ENCODE measurements at regions of chr17 and their contacts with region 1.

Region 1: GRCh38 chr17:2244545-2245525 is 58.8 kb downstream of the SMG6 start:
- DNase-seq: peak; percentile 92
- ATAC-seq: peak; percentile 80
- H3K4me3 Mint-ChIP-seq: no peak overlapping the region
- H3K27ac Mint-ChIP-seq: no peak overlapping the region
- H3K4me1 Mint-ChIP-seq: peaks cover 41% of the 10 kb centered on the region
- H3K27me3 Mint-ChIP-seq: no peaks in the 10 kb centered on the region

Region 2: GRCh38 chr17:2094891-2095535 is 149.8 kb before region 1 on chr17:
- CTCF ChIA-PET with region 1: interaction called, 25 read pairs
- POLR2A ChIA-PET with region 1: no interaction called
- intact Hi-C with region 1: no loop called
- DNase-seq: no peak
- ATAC-seq: no peak
- H3K4me3 Mint-ChIP-seq: no peak overlapping the region
- H3K27ac Mint-ChIP-seq: no peak overlapping the region
- H3K4me1 Mint-ChIP-seq: peaks cover 19% of the 10 kb centered on the region
- H3K27me3 Mint-ChIP-seq: no peaks in the 10 kb centered on the region

Region 3: GRCh38 chr17:2192367-2193057 is 52.3 kb before region 1 on chr17:
- CTCF ChIA-PET with region 1: interaction called, 23 read pairs
- POLR2A ChIA-PET with region 1: interaction called, 3 read pairs
- intact Hi-C with region 1: loop called (anchors 5 to 10 kb)
- DNase-seq: peak; percentile 69
- ATAC-seq: peak; percentile 57
- H3K4me3 Mint-ChIP-seq: no peak overlapping the region
- H3K27ac Mint-ChIP-seq: peak overlapping the region; percentile 61
- H3K4me1 Mint-ChIP-seq: peaks cover 47% of the 10 kb centered on the region
- H3K27me3 Mint-ChIP-seq: no peaks in the 10 kb centered on the region

Region 4: GRCh38 chr17:2215616-2216364 is 29.0 kb before region 1 on chr17:
- CTCF ChIA-PET with region 1: interaction called, 21 read pairs
- POLR2A ChIA-PET with region 1: no interaction called
- intact Hi-C with region 1: loop called in 1 of 2 experiments (anchors 2 kb)
- DNase-seq: peak; percentile 85
- ATAC-seq: peak; percentile 97
- H3K4me3 Mint-ChIP-seq: peak overlapping the region; percentile 74
- H3K27ac Mint-ChIP-seq: peak overlapping the region; percentile 96
- H3K4me1 Mint-ChIP-seq: peaks cover 58% of the 10 kb centered on the region
- H3K27me3 Mint-ChIP-seq: no peaks in the 10 kb centered on the region

Region 5: DNA sequence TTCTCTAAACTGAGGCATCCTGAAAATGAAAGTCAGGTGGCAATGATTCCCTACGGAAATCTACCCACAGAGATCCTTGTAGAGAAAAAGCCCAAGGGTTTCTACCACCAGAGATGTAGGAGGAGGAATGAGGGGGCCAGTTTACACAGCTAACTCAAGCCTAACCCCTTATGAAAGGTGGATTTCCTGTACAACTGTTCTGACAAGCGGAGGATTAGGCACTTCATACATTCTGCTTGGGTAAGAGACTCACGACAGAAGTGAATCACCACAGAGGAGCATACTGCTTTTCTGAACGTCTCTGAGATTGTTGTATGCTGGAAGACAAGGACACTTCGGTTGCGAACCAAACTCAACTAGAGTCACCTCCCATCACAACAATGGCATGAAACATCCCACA is 14.0 kb before region 1 on chr17:
- CTCF ChIA-PET with region 1: interaction called, 18 read pairs
- POLR2A ChIA-PET with region 1: no interaction called
- intact Hi-C with region 1: no loop called
- DNase-seq: no peak
- ATAC-seq: peak; percentile 85
- H3K4me3 Mint-ChIP-seq: no peak overlapping the region
- H3K27ac Mint-ChIP-seq: peak overlapping the region; percentile 40
- H3K4me1 Mint-ChIP-seq: peaks cover 7% of the 10 kb centered on the region
- H3K27me3 Mint-ChIP-seq: no peaks in the 10 kb centered on the region

Region 6: DNA sequence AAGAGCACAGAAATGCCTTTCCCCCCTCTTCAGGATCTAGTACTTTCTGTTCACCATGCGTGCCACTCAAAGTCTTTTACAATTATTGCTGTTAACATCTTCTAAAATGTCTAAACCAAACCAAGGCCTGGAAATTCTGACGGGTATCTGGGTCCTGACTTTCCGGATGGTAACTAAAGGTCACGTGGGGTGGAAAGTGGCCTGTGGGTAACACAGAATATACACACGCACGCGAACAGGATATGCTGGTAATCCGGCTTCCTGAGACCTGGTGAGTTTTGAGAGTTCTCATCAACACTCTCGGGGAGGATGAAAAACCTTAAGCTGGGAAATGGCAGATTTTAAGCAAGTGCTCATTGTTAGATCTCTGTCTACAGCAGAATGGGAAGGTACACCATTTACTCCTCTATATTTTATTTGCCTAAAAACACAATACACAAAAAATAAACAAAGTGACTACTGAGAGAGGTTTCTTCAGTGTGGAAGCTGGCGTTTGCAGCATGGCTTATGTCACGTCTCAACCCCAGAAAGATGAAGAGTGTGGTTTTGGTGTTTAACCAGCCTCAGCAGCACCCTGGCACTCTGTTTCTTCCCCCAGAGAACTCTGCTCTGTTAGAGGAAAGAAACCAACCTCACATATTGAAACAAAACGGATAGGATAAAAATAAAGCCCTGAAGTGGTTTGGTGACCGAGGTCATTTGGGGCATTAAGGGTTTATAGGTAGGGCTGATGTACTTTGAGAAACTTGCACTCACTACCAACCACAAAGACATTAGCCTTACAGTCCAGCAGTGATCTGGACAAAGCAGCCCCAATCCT is 21.4 kb after region 1 on chr17:
- CTCF ChIA-PET with region 1: interaction called, 19 read pairs
- POLR2A ChIA-PET with region 1: no interaction called
- intact Hi-C with region 1: no loop called
- DNase-seq: peak; percentile 93
- ATAC-seq: peak; percentile 76
- H3K4me3 Mint-ChIP-seq: peak overlapping the region; percentile 72
- H3K27ac Mint-ChIP-seq: peak overlapping the region; percentile 98
- H3K4me1 Mint-ChIP-seq: peaks cover 86% of the 10 kb centered on the region
- H3K27me3 Mint-ChIP-seq: no peaks in the 10 kb centered on the region

Region 7: GRCh38 chr17:2282297-2282873 is 37.5 kb after region 1 on chr17:
- CTCF ChIA-PET with region 1: interaction called, 78 read pairs
- POLR2A ChIA-PET with region 1: no interaction called
- intact Hi-C with region 1: loop called (anchors 2 kb)
- DNase-seq: no peak
- ATAC-seq: peak; percentile 80
- H3K4me3 Mint-ChIP-seq: no peak overlapping the region
- H3K27ac Mint-ChIP-seq: peak overlapping the region; percentile 58
- H3K4me1 Mint-ChIP-seq: peaks cover 31% of the 10 kb centered on the region
- H3K27me3 Mint-ChIP-seq: no peaks in the 10 kb centered on the region